ENCODE measurements at regions of chr18 and their contacts with region 1.

Region 1: GRCh38 chr18:48663931-48664847 is 125.4 kb downstream of the CTIF start:
- DNase-seq: peak; percentile 71 to 85
- ATAC-seq: peak; percentile 65 to 83 (median 72)
- H3K4me3 ChIP-seq: no peak overlapping the region
- H3K27ac ChIP-seq: no peak overlapping the region
- H3K4me1 ChIP-seq: peaks cover 29% of the 10 kb centered on the region
- H3K27me3 ChIP-seq: no peaks in the 10 kb centered on the region
- CTCF ChIP-seq: peak; percentile 94

Region 2: GRCh38 chr18:48475635-48476549 is 188.3 kb before region 1 on chr18:
- intact Hi-C with region 1: loop called (anchors 1 kb)
- DNase-seq: peak in 1 of 2 donors; percentile 56
- ATAC-seq: peak; percentile 81 to 94 (median 89)
- H3K4me3 ChIP-seq: no peak overlapping the region
- H3K27ac ChIP-seq: no peak overlapping the region
- H3K4me1 ChIP-seq: no peaks in the 10 kb centered on the region
- H3K27me3 ChIP-seq: no peaks in the 10 kb centered on the region
- CTCF ChIP-seq: peak; percentile 87

Region 3: GRCh38 chr18:48540251-48541025 is 123.8 kb before region 1 on chr18:
- intact Hi-C with region 1: loop called in 1 of 2 experiments (anchors 5 kb)
- DNase-seq: peak; percentile 80 to 89
- ATAC-seq: peak; percentile 76 to 83 (median 80)
- H3K4me3 ChIP-seq: peak overlapping the region; percentile 77
- H3K27ac ChIP-seq: peak overlapping the region; percentile 95
- H3K4me1 ChIP-seq: peaks cover 38% of the 10 kb centered on the region
- H3K27me3 ChIP-seq: no peaks in the 10 kb centered on the region
- CTCF ChIP-seq: peak; percentile 25

Region 4: DNA sequence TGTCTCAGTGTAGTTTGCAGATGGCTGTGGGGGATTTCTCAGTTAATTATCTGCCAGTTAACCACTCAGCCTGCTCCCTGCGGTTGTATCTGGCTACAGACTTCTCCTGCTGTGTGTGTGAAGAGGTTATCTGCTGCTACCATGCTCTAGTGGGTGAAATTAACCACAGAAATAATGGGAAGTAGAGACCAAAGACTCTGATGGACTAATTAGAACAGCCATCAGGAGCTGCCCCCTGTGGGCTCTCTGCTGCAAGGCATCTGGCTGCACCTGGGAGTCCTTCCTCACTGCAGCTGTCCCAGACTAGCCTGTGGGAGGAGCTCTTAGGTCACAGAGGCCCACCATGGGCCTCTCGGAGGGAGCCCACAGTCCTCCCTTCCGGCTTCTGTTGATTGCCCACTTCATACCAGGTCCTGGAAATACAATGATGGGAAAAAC is 58.8 kb before region 1 on chr18:
- intact Hi-C with region 1: loop called (anchors 5 kb)
- DNase-seq: no peak
- ATAC-seq: no peak
- H3K4me3 ChIP-seq: no peak overlapping the region
- H3K27ac ChIP-seq: no peak overlapping the region
- H3K4me1 ChIP-seq: peaks cover 46% of the 10 kb centered on the region
- H3K27me3 ChIP-seq: no peaks in the 10 kb centered on the region
- CTCF ChIP-seq: no peak